ENCODE measurements at regions of chr2 and their contacts with region 1.

Region 1: DNA sequence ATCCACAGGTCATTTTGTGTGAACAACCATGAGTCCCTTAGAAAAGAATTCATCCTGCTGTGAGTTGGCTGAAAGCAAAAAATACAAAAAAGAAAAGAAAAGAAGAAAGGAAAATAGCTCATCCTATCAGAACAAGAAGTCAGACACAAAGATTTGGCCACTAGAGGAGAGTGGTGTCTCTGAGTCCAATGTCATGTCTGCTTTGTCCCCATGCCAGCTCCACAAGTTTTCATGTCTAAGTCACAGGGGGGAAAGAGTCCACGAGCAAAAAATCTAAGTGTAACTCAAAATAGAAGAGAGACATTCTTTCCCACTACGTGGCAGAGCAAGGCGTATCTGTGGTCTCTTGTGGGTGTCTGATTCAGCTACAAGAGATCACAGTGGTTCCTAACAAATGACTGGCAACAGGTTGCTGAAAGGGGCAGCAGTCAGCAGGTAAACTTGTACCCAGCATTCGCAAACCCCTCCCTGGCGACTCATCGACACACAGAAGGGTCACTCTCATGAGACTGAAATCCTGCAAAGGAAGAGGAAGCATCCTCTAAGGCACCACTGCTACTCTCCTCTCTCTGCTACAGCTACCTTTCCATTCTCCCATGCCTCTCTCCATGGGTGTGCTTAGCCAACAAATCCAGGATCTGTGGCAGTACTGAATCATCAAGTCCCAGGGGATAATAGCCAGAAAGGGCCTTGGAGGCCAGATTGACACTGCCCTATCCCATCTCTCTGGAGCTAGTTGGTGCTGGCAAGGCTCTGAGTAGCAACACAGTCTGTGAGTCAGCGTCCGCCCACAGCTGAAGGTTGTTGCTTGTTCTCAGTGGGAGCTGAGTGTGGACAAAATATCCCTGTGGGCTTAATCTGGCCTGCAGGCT is 123.0 kb upstream of the SLC39A10 start:
- DNase-seq: peak; percentile 85
- H3K4me3 Mint-ChIP-seq: peak overlapping the region; percentile 75
- H3K27ac Mint-ChIP-seq: peak overlapping the region; percentile 98
- H3K4me1 Mint-ChIP-seq: peaks cover 79% of the 10 kb centered on the region
- H3K27me3 Mint-ChIP-seq: no peaks in the 10 kb centered on the region

Region 2: DNA sequence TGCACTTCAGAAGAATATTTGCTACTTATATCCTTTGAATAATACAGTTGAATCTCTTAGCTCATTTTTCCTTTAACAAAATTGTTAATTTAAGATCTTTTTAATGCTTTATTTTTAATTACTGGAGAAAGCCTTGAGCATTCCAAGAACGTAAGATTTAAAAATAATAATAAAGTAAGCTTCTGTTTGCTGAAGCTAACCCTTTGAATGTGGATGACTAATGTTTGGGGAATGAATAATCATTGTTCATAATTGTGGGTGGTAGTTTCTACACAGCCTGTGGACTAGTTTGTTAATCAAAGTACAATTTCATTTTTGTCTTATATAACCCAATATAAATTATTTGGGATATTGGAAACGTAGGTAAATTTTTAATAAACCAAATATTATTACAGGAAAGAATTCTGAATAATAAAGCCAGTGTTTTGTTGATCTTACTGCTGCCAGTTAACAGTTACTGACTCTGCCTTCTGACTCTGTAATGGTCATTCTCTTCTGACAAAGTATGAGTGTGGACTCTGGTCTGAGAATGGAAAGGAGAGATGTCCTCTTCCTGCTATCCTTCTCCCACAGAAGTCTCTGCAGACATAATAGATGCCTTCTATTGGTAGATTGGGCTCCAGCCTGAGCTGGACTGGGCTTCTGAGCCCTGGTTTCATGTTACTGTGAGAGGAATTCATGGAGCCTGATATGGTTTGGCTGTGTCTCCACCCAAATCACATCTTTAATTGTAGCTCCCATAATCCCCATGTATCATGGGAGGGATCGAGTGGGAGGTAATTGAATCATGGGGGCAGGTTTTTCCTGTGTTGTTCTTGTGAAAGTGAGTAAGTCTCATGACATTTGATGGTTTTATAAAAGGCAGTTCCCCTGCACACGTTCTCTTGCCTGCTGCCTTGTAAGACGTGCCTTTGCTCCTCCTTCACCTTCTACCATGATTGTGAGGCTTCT is 169.7 kb before region 1 on chr2:
- CTCF ChIA-PET with region 1: no interaction called
- intact Hi-C with region 1: no loop called
- DNase-seq: no peak
- H3K4me3 Mint-ChIP-seq: no peak overlapping the region
- H3K27ac Mint-ChIP-seq: no peak overlapping the region
- H3K4me1 Mint-ChIP-seq: peaks cover 28% of the 10 kb centered on the region
- H3K27me3 Mint-ChIP-seq: no peaks in the 10 kb centered on the region

Region 3: GRCh38 chr2:195442458-195443175 is 91.4 kb before region 1 on chr2:
- CTCF ChIA-PET with region 1: no interaction called
- intact Hi-C with region 1: loop called (anchors 1 kb)
- DNase-seq: peak; percentile 19
- H3K4me3 Mint-ChIP-seq: no peak overlapping the region
- H3K27ac Mint-ChIP-seq: peak overlapping the region; percentile 18
- H3K4me1 Mint-ChIP-seq: peaks cover 8% of the 10 kb centered on the region
- H3K27me3 Mint-ChIP-seq: no peaks in the 10 kb centered on the region

Region 4: GRCh38 chr2:195498176-195498575 is 35.8 kb before region 1 on chr2:
- CTCF ChIA-PET with region 1: interaction called, 21 read pairs
- intact Hi-C with region 1: loop called (anchors 1 kb)
- DNase-seq: peak; percentile 76
- H3K4me3 Mint-ChIP-seq: no peak overlapping the region
- H3K27ac Mint-ChIP-seq: no peak overlapping the region
- H3K4me1 Mint-ChIP-seq: peaks cover 44% of the 10 kb centered on the region
- H3K27me3 Mint-ChIP-seq: no peaks in the 10 kb centered on the region

Region 5: GRCh38 chr2:195575879-195576401 is 41.9 kb after region 1 on chr2:
- CTCF ChIA-PET with region 1: interaction called, 18 read pairs
- intact Hi-C with region 1: loop called (anchors 1 kb)
- DNase-seq: peak; percentile 32
- H3K4me3 Mint-ChIP-seq: peak overlapping the region; percentile 37
- H3K27ac Mint-ChIP-seq: peak overlapping the region; percentile 78
- H3K4me1 Mint-ChIP-seq: peaks cover 77% of the 10 kb centered on the region
- H3K27me3 Mint-ChIP-seq: no peaks in the 10 kb centered on the region

Region 6: DNA sequence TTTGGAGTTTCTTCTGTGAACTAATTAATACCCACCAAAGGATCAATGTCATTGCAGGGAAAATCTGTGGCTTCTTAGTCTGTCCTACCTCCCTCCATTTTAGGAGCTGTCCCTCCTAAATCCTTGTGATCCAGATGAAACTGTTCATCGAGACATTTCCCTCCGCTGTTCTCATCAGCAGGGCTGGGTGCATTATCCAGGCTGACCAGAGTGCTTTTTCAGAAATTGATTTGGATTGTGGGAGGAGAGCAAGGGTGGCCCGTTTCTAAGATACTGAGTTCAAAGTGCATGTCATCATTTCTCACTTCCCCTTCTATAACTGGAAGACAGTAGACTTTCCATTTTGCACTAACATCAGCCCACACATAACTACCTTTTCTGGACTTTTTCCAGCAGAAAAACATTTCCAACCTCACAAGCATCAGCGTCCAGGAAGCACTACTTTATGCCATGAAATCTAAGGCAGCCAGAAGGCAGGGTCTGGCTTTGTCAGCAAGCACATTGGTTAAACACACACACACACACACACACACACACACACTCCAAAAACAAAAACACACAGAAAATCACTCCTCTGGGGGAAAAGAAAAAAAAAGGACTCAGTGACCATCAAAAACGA is 1682.5 kb after region 1 on chr2:
- CTCF ChIA-PET with region 1: no interaction called
- intact Hi-C with region 1: loop called (anchors 10 kb)
- DNase-seq: no peak
- H3K4me3 Mint-ChIP-seq: peak overlapping the region; percentile 69
- H3K27ac Mint-ChIP-seq: peak overlapping the region; percentile 97
- H3K4me1 Mint-ChIP-seq: peaks cover 94% of the 10 kb centered on the region
- H3K27me3 Mint-ChIP-seq: no peaks in the 10 kb centered on the region

Measured in activated naive CD4-positive, alpha-beta T cell treated with anti-CD3 and anti-CD28 coated beads for 36 hours (primary cell).